Right ventricle myocardium inferior (tissue), 1 donor: ENCODE measurements at regions of chr4 and their contacts with region 1.

Region 1: DNA sequence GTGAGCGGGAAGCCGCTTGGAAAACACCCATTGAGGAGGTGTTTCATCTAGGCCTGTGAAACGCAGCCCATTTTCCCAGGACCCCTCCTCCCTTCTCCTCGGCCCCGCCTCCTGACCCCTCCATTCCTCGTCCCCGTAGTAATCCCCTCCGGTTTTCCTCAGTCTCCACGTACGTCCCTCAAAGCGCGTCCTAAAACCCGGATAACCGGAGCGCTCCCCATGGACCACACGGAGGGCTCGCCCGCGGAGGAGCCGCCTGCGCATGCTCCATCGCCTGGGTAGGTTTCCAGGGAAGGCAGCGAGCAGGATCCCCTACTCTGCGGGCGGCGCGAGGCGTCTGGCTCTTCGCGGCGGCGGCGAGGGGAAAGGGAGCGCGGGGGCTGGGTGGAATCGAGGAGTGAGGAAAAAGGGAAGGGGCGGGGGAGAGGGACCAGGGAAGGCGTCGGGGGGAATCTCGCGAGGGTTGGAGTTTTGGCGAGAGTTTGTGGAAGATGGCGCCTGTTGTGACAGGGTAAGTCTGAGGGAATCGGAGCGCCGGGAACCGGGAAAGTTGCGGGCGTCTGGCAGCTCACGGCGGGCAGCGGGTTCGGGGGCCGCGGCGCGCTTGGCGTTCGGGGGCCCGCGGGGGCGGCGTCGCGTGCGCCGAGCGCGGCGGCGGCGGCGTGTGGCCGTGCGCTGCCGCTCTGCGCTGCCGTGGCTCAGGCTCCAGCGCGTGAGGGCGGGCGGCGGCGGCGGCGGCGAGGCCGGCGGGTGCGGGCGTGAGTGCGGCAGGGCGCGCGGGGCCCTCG is at the start of gene RBPJ:
- DNase-seq: peak; percentile 93
- ATAC-seq: peak; percentile 84
- total RNA-seq, gene RBPJ: 42.1 TPM

Region 2: DNA sequence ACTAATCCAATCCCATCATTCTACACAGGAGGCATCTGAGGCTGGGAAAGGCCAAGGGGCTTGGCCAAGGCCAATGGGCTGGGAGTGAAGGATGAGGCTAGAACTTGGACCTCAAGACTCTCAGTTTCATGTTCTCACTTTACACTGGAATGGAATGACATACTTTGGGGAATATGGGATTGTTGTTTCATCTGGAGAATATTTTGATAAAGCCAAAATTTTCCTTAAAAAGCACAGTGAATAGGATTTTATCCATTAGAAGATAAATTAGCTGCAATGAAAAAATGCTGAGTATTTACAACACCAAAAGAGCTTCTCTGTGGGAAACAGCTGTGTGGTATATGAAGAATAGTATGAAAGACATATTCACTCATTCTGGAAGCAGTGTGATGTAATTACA is 377.4 kb before region 1 on chr4:
- intact Hi-C with region 1: loop called (anchors 5 kb)
- DNase-seq: no peak
- ATAC-seq: peak; percentile 80

Region 3: DNA sequence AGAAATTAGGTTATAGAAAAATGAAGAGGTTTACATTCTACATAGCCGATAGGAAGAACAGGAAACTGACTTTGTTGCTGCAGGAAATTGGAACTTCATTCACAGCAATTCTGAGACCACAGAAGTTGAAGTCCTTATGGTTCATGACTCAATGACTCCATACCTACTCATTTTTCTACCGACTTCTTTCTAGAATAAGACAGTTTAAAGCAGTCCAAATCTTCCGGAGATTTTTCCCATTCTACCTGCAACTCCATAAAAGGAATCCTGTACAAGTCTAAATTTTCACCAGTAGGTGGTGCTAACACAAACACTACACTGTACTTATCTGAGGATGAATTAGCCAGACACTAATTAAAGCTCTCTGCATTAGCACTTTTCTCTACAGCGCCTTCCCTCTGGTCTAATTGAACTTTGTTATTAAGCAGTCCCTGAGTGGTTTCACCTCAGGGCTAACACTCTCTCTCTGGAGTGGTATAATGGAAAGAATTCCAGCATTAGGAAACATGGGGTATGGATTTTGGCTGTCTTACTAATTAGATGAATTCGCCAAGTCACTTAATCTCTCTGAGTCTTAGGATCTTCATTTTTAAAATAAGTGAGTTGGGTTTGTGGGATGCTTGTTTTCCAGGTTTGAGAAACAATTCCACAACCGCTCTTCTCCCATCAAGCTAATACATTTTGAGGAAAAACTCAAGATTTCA is 238.8 kb before region 1 on chr4:
- intact Hi-C with region 1: loop called (anchors 5 kb)
- DNase-seq: no peak
- ATAC-seq: peak; percentile 36

Region 4: DNA sequence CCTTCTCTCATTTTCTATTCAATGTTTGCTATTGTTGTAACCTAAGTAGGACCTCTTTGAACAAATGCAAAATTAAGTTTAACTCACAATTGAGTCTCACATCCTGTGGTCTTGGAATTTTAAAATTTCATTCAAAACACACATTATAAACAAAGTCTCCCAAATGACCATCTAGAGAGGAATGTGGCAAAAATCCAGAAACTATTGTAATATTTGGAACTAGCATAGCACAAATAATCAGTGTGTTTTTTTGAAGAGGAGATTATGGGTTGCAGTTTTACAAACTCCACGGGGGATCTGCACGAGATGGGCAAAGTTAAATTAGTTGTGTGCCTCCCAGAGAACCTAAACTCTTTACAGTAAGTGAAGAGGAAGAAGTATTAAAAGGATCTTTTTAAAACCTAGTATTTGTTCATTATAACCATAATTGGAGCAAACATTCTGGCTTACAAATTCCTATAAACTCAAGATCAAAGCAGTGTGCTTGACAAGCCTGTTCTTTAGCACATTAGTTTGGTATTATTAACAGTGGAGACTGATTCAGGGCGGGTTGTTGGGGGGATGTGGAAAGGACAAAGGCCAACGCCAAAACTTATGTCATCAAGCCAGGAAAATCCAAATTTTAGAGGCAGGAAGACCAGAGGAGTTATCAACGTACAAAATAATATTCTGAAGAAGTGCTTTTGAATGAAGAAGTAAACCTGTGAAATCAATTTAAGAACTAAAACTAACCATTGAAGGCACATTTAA is 22.4 kb before region 1 on chr4:
- intact Hi-C with region 1: no loop called
- DNase-seq: no peak
- ATAC-seq: no peak

Region 5: DNA sequence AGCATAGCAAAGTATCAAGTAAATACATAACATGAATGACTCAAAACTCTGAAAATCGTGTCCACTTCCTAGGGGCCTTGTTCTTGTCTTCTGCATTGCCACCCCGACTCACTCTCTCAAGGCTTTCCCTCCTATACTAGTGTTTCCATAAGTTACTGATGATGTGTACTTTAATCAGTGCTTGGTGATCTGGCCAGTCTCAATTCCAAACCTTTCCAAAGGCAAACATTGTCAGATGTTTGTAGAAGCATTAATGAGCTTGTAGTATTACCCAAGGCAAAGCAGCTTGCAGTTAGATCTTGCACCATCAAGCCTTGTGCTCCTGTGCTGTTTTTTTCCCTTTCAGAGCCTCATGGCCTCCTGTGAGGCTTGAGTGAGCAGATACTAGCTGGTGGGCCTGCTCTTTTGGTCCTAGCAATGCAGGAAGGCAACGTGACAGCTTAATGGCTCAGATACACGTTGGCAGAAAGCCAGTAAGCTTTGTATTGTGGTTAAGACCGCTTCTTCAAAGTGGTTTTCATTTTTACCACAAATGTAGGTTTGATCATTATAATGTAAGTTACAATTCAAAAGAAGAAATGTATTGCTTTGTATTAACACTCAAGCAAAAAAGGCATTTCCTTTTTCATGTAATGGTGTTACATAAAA is 51.9 kb after region 1 on chr4:
- intact Hi-C with region 1: no loop called
- DNase-seq: no peak
- ATAC-seq: peak; percentile 38

Region 6: GRCh38 chr4:26583865-26584652 is 263.3 kb after region 1 on chr4 and contains the start of gene TBC1D19:
- intact Hi-C with region 1: loop called (anchors 10 kb)
- DNase-seq: peak; percentile 93
- ATAC-seq: peak; percentile 100
- total RNA-seq, gene TBC1D19: 8.8 TPM